Endothelial cell of umbilical vein (primary cell): ENCODE measurements at regions of chr7 and their contacts with region 1.

Region 1: DNA sequence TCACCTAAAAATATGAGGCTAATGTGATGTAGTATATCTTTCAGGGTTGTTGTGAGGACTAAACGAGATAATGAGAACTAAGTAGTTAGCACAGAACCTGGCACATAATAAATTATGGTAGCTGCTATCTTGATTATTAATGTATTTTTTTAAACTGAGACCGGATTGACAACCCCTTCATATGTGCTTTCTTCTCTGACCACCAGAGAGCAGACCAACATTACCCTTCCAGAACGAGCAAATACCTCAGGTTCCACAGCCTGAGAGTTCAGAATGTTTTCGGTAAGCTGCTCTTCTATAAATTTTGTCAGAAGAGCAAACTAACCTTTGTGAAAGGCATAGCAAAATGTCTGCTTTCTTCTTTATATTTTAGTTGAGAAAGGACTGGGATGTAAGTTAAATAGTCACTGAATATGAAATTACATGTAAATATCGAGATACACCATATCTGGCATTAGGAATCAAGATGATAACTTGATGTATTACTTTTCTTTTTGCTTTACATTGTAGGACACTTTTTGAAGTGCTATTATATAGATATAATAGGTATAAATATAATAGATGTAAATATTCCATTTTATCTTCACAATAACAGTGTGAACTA is 13.6 kb upstream of the BPGM start:
- DNase-seq: peak; percentile 79
- H3K4me3 ChIP-seq: no peak overlapping the region
- H3K27ac ChIP-seq: peak overlapping the region; percentile 20
- H3K4me1 ChIP-seq: peaks cover 29% of the 10 kb centered on the region
- H3K27me3 ChIP-seq: no peaks in the 10 kb centered on the region
- CTCF ChIP-seq: peak; percentile 58 to 70
- POLR2A ChIP-seq: no peak

Region 2: GRCh38 chr7:134016223-134016941 is 616.7 kb before region 1 on chr7:
- CTCF ChIA-PET with region 1: no interaction called
- POLR2A ChIA-PET with region 1: no interaction called
- dilution Hi-C with region 1: no loop called
- intact Hi-C with region 1: no loop called
- DNase-seq: peak; percentile 57
- H3K4me3 ChIP-seq: no peak overlapping the region
- H3K27ac ChIP-seq: no peak overlapping the region
- H3K4me1 ChIP-seq: no peaks in the 10 kb centered on the region
- H3K27me3 ChIP-seq: no peaks in the 10 kb centered on the region
- CTCF ChIP-seq: peak; percentile 59 to 76
- POLR2A ChIP-seq: no peak

Region 3: GRCh38 chr7:134646425-134647305 is 13.6 kb after region 1 on chr7 and contains the start of gene BPGM:
- CTCF ChIA-PET with region 1: interaction called, 60 read pairs
- POLR2A ChIA-PET with region 1: interaction called, 8 read pairs
- dilution Hi-C with region 1: no loop called
- intact Hi-C with region 1: loop called (anchors 1 kb)
- DNase-seq: peak; percentile 100
- H3K4me3 ChIP-seq: peak within 1 kb of the TSS; percentile 78 to 99 (median 97)
- H3K27ac ChIP-seq: peak within 1 kb of the TSS; percentile 81
- H3K4me1 ChIP-seq: peaks cover 11% of the 10 kb centered on the region
- H3K27me3 ChIP-seq: no peaks in the 10 kb centered on the region
- CTCF ChIP-seq: peak in 1 of 2 donors; percentile 36
- POLR2A ChIP-seq: peak; percentile 95
- total RNA-seq, gene BPGM: 28.3 and 44.4 TPM in 2 replicates

Region 4: GRCh38 chr7:134701272-134701671 is 68.2 kb after region 1 on chr7:
- CTCF ChIA-PET with region 1: interaction called, 163 read pairs
- POLR2A ChIA-PET with region 1: no interaction called
- dilution Hi-C with region 1: no loop called
- intact Hi-C with region 1: loop called (anchors 1 kb)
- DNase-seq: peak; percentile 55
- H3K4me3 ChIP-seq: no peak overlapping the region
- H3K27ac ChIP-seq: no peak overlapping the region
- H3K4me1 ChIP-seq: peaks cover 13% of the 10 kb centered on the region
- H3K27me3 ChIP-seq: no peaks in the 10 kb centered on the region
- CTCF ChIP-seq: peak; percentile 54 to 55
- POLR2A ChIP-seq: no peak

Region 5: DNA sequence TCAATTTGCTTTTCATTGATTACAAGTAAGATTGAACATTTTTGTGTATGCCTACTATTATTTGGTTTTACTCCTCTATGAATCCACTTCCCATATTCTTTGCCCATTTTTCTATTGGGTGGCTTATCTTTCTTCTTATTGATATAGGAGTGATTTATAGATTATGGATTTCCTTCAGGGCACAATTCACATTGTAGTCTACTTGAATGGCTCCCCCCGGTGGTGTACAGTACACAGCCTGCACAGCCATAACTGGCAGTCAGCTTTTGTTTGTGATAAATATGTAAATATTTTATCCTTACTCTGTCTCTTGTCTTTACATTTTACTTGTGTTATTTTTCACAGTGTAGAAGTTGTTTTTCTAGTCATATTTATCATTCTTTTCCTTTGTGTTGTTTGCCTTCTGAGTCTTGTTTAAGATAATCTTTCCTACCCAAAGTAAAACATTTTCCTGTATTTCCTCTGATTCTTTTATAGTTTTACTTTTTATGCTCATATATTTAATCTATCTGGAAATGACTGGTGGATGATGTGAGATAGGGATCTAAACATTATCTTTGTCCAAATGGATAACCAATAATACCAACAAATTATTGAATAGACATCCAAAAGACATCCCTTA is 122.5 kb after region 1 on chr7:
- CTCF ChIA-PET with region 1: interaction called, 34 read pairs
- POLR2A ChIA-PET with region 1: no interaction called
- dilution Hi-C with region 1: no loop called
- intact Hi-C with region 1: loop called (anchors 1 kb)
- DNase-seq: peak; percentile 54
- H3K4me3 ChIP-seq: no peak overlapping the region
- H3K27ac ChIP-seq: no peak overlapping the region
- H3K4me1 ChIP-seq: no peaks in the 10 kb centered on the region
- H3K27me3 ChIP-seq: no peaks in the 10 kb centered on the region
- CTCF ChIP-seq: peak; percentile 48 to 60
- POLR2A ChIP-seq: no peak

Region 6: GRCh38 chr7:134954197-134955082 is 321.4 kb after region 1 on chr7:
- CTCF ChIA-PET with region 1: interaction called, 10 read pairs
- POLR2A ChIA-PET with region 1: no interaction called
- dilution Hi-C with region 1: no loop called
- intact Hi-C with region 1: loop called (anchors 1 kb)
- DNase-seq: peak; percentile 38
- H3K4me3 ChIP-seq: no peak overlapping the region
- H3K27ac ChIP-seq: no peak overlapping the region
- H3K4me1 ChIP-seq: no peaks in the 10 kb centered on the region
- H3K27me3 ChIP-seq: no peaks in the 10 kb centered on the region
- CTCF ChIP-seq: peak; percentile 20 to 37
- POLR2A ChIP-seq: no peak